HepG2 (cell line): ENCODE measurements at regions of chr3 and their contacts with region 1.

Region 1: DNA sequence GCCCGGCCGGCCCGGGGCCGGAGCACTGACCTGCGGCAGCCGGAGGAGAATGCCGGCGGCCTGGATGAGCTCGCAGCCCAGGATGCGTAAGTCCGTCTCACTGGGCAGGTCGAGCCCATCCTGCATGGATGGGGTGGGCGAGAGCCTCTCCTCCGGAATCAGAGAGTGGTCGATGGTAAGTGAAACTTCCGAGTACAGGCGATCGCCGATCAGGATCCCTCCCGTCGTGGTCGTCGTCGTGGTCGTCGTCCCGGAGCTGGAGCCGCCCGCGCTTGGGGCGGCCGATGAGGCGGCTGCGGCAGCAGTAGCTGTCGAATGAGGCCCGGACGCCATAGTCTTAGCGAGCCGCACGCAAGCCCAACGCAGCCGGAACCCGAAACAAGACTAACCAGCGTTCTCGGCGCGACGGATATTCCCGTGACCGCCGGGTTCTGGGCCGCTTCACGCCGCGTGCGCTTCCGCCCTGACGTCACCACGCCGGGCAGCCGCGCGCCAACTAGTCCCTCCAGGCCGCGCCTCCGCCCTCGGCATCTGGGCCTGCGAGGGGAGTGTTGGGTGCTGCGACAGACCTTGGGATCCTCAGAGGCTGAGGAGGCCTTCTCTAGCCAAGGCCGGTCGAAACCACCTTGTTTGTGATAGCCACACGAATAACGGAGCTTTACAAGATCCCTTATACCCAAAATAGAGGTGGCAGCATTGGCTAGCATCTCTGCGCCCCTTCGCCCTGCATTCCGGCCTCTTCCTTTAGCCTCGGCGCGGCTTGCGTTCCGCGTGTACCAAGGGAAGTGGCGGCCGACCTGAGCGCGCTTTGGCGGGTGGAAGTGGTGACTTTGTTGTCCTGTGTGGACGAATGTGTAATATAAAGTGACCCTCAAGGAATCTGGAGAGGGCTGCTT is at the start of gene CCNL1:
- DNase-seq: peak; percentile 88
- ATAC-seq: peak; percentile 87
- H3K4me3 ChIP-seq: peak within 1 kb of the TSS; percentile 94 to 99 (median 98)
- H3K27ac ChIP-seq: peak within 1 kb of the TSS; percentile 100
- H3K4me1 ChIP-seq: peaks cover 64% of the 10 kb centered on the region
- H3K27me3 ChIP-seq: no peaks in the 10 kb centered on the region
- CTCF ChIP-seq: 0 out of 2 replicates have a peak, but pooled peaks have one; percentile 15
- EP300 ChIP-seq: peak; percentile 58 to 70; a peak in 3 of 4 replicates
- POLR2A ChIP-seq: peak; percentile 97 to 99
- RAD21 ChIP-seq: peak; percentile 64
- total RNA-seq, gene CCNL1: 23.5 and 151 TPM in 2 replicates

Region 2: GRCh38 chr3:157088601-157089454 is 71.2 kb before region 1 on chr3:
- CTCF ChIA-PET with region 1: no interaction called
- POLR2A ChIA-PET with region 1: interaction called, 38 read pairs
- in situ Hi-C with region 1: no loop called
- intact Hi-C with region 1: no loop called
- DNase-seq: peak; percentile 91
- ATAC-seq: peak; percentile 93
- H3K4me3 ChIP-seq: peak overlapping the region; percentile 56 to 67 (median 58)
- H3K27ac ChIP-seq: peak overlapping the region; percentile 96
- H3K4me1 ChIP-seq: peaks cover 43% of the 10 kb centered on the region
- H3K27me3 ChIP-seq: no peaks in the 10 kb centered on the region
- CTCF ChIP-seq: peak; percentile 54
- EP300 ChIP-seq: peak in 1 of 2 experiments; percentile 72; a peak in 1 of 4 replicates
- POLR2A ChIP-seq: peak; percentile 49 to 83
- RAD21 ChIP-seq: 0 out of 2 replicates have a peak, but pooled peaks have one; percentile 35

Region 3: DNA sequence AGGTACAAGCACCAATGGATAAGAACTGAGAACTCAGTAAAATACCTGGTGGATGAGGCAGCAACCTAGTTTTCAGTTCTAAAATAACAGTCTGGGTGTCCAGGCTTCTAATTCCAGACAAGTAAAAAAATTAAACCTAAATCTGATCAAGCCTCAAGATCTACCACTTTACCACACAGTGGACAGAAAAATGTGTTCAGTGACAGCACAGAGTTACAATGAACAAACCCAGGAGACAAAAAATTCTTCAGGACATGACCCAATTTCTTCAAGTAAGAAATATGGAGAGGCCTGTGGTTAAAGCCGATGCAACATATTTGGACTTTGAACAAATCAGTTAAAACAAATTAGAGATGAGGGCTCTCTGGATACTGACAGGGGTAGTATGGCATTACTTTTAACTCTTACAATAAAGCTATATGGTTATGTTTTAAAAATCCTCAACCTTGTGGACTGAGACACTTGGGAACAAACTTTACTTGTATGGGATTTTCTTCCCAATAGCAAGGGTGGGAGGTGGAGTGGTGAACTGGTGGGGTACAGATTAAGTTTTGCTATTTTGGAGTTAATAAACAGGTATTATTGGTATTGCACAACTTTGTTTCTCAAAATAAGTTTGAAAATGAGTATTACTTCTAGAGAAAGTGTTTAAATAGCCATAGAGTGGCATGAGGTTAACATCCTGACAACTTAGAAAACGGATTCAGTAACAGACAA is 14.2 kb before region 1 on chr3:
- CTCF ChIA-PET with region 1: no interaction called
- POLR2A ChIA-PET with region 1: interaction called, 13 read pairs
- in situ Hi-C with region 1: no loop called
- intact Hi-C with region 1: no loop called
- DNase-seq: no peak
- ATAC-seq: peak; percentile 24
- H3K4me3 ChIP-seq: no peak overlapping the region
- H3K27ac ChIP-seq: peak overlapping the region; percentile 28
- H3K4me1 ChIP-seq: 0 out of 2 replicates have a peak, but pooled peaks cover 8% of the 10 kb centered on the region
- H3K27me3 ChIP-seq: no peaks in the 10 kb centered on the region; a peak in 1 of 5 replicates
- CTCF ChIP-seq: no peak
- EP300 ChIP-seq: no peak
- POLR2A ChIP-seq: peak in 1 of 2 experiments; percentile 14; a peak in 1 of 4 replicates
- RAD21 ChIP-seq: no peak

Region 4: DNA sequence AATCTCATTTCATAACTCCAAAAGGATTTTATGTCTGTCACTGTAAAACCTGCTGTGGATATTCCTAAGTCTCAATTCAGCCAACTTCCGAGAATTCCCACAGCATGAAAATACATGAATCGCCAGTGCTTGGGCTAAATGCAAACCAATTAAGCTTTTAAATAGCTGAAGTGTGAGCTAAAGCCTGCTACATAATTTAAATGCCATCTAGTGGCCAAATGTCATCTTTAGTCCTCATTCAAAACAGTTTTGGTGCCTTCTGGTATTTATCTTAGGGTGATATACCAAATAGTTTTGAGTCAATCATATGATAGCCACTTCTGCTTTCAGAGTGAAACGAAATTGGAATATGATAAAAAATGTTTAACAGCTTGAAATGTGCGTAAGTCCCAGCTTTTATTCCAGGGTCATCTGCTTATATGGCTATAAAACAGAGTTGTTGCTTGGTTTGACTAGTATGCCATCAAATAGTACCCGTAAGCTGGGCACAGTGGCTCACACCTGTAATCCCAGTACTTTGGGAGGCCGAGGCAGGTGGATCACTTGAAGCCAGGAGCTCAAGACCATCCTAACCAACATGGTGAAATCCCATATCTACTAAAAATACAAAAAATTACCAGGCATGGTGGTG is 41.8 kb after region 1 on chr3:
- CTCF ChIA-PET with region 1: interaction called, 4 read pairs
- POLR2A ChIA-PET with region 1: interaction called, 9 read pairs
- in situ Hi-C with region 1: no loop called
- intact Hi-C with region 1: loop called (anchors 1 kb)
- DNase-seq: peak; percentile 29
- ATAC-seq: peak; percentile 74
- H3K4me3 ChIP-seq: no peak overlapping the region
- H3K27ac ChIP-seq: no peak overlapping the region
- H3K4me1 ChIP-seq: no peaks in the 10 kb centered on the region
- H3K27me3 ChIP-seq: no peaks in the 10 kb centered on the region; a peak in 2 of 5 replicates
- CTCF ChIP-seq: peak; percentile 58
- EP300 ChIP-seq: no peak
- POLR2A ChIP-seq: no peak
- RAD21 ChIP-seq: no peak

Region 5: DNA sequence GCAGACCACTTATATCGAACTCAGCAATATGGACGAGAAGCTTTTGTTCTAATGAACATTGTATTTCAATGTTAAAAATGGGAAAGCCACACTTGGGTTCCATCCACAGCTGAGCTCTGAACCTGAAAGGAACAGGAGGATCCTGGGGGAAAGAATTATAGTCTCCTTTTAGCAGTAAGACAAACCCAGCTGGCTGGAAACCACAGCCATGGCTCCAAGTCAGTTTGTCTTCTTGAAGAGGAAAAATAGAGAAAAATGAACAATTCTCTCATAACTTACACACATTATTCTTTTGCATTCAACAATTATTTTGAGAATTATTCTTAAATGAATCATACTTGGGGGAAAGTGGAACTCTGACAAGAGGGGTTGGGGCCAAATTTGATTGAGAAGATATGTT is 492.4 kb after region 1 on chr3:
- CTCF ChIA-PET with region 1: no interaction called
- POLR2A ChIA-PET with region 1: no interaction called
- in situ Hi-C with region 1: no loop called
- intact Hi-C with region 1: no loop called
- DNase-seq: no peak
- ATAC-seq: no peak
- H3K4me3 ChIP-seq: no peak overlapping the region
- H3K27ac ChIP-seq: no peak overlapping the region
- H3K4me1 ChIP-seq: no peaks in the 10 kb centered on the region
- H3K27me3 ChIP-seq: no peaks in the 10 kb centered on the region
- CTCF ChIP-seq: no peak
- EP300 ChIP-seq: no peak
- POLR2A ChIP-seq: no peak
- RAD21 ChIP-seq: no peak